ENCODE measurements at regions of chr20 and their contacts with region 1.

Region 1: GRCh38 chr20:10369723-10370090 is 64.3 kb downstream of the MKKS start:
- DNase-seq: peak in 1 of 2 donors; percentile 66
- ATAC-seq: no peak
- H3K4me3 ChIP-seq: no peak overlapping the region
- H3K27ac ChIP-seq: no peak overlapping the region
- H3K4me1 ChIP-seq: peaks cover 0 to 2% of the 10 kb centered on the region in 2 donors
- H3K27me3 ChIP-seq: no peaks in the 10 kb centered on the region

Region 2: GRCh38 chr20:10171864-10172751 is 197.6 kb before region 1 on chr20:
- intact Hi-C with region 1: loop called in 1 of 2 experiments (anchors 5 kb)
- DNase-seq: peak; percentile 70 to 87
- ATAC-seq: peak; percentile 79
- H3K4me3 ChIP-seq: peak overlapping the region; percentile 57 to 87
- H3K27ac ChIP-seq: no peak overlapping the region
- H3K4me1 ChIP-seq: no peaks in the 10 kb centered on the region
- H3K27me3 ChIP-seq: no peaks in the 10 kb centered on the region

Region 3: DNA sequence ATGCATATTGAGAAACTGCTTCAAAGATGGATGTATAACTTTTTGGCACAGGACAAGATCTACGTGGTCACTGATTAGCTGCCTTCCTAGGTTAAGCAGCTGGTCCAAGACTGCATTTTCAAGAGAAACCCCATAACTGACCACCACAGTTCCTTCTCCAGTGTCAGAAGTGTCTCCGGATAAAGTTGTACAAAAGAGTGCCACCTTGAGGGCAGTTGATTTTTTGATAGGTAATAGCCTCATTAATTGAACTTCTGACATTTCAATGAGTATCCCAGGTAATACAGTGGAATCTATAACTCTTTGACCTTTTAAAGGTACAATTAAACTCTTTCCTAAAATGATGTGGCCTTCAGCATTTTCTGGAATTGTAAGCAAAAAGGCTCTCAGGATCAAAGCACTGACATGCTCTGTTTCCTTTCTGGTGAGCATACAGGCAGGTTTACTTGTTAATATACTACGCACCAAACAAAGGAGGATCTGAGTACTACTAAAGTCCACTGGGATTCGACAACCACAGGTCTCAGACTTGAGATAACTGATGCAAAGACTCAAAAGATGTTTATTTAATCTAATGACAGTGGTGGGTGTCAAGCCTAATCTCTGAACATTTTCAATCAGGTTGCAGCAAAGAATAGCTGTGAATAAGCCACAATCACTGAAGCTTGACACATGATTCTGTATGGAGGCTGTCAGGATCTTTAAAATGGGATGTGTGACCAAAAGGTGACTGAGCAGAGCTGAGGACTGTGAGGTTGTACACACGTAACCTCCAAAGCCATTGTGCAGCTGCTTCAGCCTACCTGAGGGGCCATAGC is 43.1 kb after region 1 on chr20:
- intact Hi-C with region 1: no loop called
- DNase-seq: no peak
- ATAC-seq: no peak
- H3K4me3 ChIP-seq: no peak overlapping the region
- H3K27ac ChIP-seq: no peak overlapping the region
- H3K4me1 ChIP-seq: peaks cover 0 to 3% of the 10 kb centered on the region in 2 donors
- H3K27me3 ChIP-seq: no peaks in the 10 kb centered on the region

Region 4: GRCh38 chr20:10793766-10794165 is 424.1 kb after region 1 on chr20:
- intact Hi-C with region 1: no loop called
- DNase-seq: no peak
- ATAC-seq: no peak
- H3K4me3 ChIP-seq: no peak overlapping the region
- H3K27ac ChIP-seq: no peak overlapping the region
- H3K4me1 ChIP-seq: no peaks in the 10 kb centered on the region
- H3K27me3 ChIP-seq: no peaks in the 10 kb centered on the region